IMR-90 (cell line): ENCODE measurements at regions of chr11 and their contacts with region 1.

Region 1: GRCh38 chr11:119651802-119652584 is 77.0 kb downstream of the NECTIN1 start:
- DNase-seq: no peak
- ATAC-seq: no peak
- H3K4me3 ChIP-seq: no peak overlapping the region
- H3K27ac ChIP-seq: no peak overlapping the region
- H3K4me1 ChIP-seq: no peaks in the 10 kb centered on the region
- H3K27me3 ChIP-seq: peaks cover 22% of the 10 kb centered on the region
- CTCF ChIP-seq: no peak
- POLR2A ChIP-seq: no peak
- RAD21 ChIP-seq: no peak

Region 2: DNA sequence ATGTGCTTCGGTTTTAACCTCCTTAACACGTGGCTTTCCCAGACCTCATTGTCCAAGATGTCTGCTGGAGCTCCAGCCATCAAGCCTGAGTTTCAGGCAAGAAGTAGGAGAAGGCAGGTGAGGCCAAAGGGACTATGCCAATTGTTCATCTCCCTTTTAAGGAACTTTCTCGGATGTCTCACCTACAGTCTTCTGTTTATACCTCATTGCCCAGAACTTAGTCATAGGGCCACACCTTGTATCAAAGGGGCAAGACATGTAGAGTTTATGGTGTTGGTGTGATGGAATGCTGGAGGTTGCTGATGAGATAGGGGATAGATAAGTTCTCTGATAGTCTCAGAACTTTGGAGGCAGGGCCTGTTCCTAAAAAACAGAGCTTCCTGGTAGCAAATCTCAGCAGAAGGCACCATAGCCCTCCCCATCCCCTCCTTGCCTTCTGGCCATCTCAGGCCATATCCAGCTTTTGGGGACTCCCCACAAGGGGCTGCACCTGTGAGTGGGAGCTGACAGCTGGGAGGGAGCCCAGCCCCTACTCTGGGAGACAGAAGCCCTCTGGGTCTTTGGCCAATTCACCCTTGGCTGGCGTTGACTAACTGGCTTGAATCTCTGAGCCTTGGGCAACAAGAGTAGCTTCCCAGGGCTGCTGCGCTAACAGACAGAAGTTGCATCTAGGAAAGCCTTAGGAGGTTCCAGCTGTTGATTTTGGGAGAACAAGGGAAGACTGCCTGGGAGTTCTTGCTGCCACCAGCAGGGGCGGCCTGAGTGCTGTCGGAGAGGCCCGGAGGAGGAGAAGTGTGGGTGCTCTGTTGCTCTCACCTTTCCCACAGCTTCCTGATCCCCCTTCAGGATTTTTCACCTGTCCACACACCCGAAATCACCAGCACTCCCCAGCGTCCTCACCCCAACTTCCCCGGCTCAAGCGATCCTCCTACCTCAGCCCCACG is 79.2 kb before region 1 on chr11:
- CTCF ChIA-PET with region 1: no interaction called
- POLR2A ChIA-PET with region 1: no interaction called
- dilution Hi-C with region 1: no loop called
- in situ Hi-C with region 1: no loop called
- intact Hi-C with region 1: no loop called
- DNase-seq: no peak
- ATAC-seq: no peak
- H3K4me3 ChIP-seq: no peak overlapping the region
- H3K27ac ChIP-seq: no peak overlapping the region
- H3K4me1 ChIP-seq: peaks cover 8% of the 10 kb centered on the region
- H3K27me3 ChIP-seq: peaks cover 16% of the 10 kb centered on the region
- CTCF ChIP-seq: no peak
- POLR2A ChIP-seq: no peak
- RAD21 ChIP-seq: no peak

Region 3: DNA sequence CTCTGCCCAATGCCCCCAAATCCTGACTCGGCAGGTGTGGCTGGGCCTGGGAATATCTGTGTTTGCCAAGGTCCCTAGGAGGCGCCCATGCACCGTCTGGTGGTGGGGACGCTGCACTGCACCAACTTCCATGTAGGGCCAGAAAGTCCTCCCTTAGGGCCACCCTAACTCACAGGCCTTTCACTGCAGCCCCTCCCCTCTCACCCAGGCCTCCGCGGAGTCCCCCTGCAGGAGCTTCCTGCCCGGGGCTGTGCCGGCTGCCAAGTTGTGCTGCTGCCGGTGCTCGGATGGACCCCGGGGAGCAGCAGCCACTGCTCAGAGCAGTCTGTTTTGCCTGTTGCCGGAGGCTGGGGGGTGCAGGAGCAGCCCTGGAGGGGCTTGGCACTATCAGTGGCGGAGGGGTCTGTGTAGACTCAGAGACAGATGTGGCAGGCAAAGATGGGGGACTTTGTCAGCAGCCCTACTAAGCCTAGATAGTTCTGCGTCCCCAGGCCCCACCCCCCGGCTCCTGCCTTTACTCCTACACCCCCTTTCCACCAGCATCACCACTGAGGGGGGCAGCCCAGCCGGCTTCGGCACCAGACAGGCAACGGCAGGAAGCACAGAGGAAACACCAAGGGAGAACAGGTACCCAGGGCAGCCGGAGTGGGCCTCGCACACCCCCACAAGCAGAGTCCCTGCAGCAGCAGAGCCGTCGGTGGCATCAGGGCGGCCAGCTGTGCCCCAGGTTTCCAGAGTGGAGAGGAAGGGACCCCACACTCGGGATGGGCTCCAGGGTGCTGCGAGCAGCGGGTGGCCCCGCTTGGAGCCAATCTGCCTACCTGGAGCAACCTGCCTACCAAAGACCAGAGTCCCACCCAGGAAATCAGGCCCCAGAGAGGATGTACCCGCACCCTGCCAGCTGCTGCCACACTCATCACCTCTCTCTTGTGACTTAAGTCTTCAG is 361.6 kb after region 1 on chr11:
- CTCF ChIA-PET with region 1: no interaction called
- POLR2A ChIA-PET with region 1: no interaction called
- dilution Hi-C with region 1: no loop called
- in situ Hi-C with region 1: loop called (anchors 10 kb)
- intact Hi-C with region 1: no loop called
- DNase-seq: peak; percentile 10
- ATAC-seq: peak; percentile 57
- H3K4me3 ChIP-seq: no peak overlapping the region
- H3K27ac ChIP-seq: no peak overlapping the region
- H3K4me1 ChIP-seq: no peaks in the 10 kb centered on the region
- H3K27me3 ChIP-seq: peaks cover 38% of the 10 kb centered on the region
- CTCF ChIP-seq: peak; percentile 53
- POLR2A ChIP-seq: no peak
- RAD21 ChIP-seq: peak; percentile 47